CD4-positive, alpha-beta memory T cell (primary cell): ENCODE measurements at regions of chr5 and their contacts with region 1.

Region 1: GRCh38 chr5:112860929-112861637 is at the start of gene SRP19:
- DNase-seq: peak; percentile 90 to 93 (median 92)
- H3K4me3 ChIP-seq: peak within 1 kb of the TSS; percentile 71 to 95
- H3K4me3 Mint-ChIP-seq: peak within 1 kb of the TSS; percentile 96 to 98 (median 97)
- H3K27ac ChIP-seq: peak within 1 kb of the TSS; percentile 97
- H3K27ac Mint-ChIP-seq: peak within 1 kb of the TSS; percentile 98 to 99 (median 98)
- H3K4me1 ChIP-seq: peaks cover 32% of the 10 kb centered on the region
- H3K4me1 Mint-ChIP-seq: peaks cover 19 to 36% (median 30%) of the 10 kb centered on the region in 4 donors
- H3K27me3 ChIP-seq: no peaks in the 10 kb centered on the region
- H3K27me3 Mint-ChIP-seq: peaks cover 6 to 8% of the 10 kb centered on the region in 2 donors
- total RNA-seq, gene SRP19: 51.4 to 54.4 TPM

Region 2: DNA sequence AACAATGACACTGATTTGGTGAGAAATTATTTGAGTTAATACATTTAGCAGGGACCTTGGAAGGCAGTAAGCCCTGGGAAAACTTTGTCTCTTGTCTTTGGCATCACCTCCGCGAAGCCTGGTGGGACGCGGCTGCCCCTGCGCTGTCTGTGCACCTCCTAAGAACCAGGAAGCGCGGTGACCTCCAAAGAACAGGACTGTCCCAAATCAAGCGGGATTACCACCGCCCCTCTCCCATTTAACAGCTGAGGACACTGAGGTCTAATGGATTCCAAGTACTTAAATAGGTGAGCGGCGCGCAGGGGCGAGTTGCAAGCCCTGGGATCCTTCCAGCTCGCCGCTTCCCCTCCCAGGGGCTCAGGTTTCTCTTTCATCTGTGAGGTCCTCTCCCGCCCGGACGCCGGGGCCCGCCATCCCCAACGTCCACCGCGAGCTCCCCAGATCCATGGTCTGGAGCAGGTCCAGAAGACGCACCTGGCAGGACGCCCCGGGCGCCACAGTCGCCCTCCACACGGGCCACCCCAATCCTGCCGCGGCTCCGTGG is 1349.2 kb before region 1 on chr5:
- CTCF ChIA-PET with region 1: no interaction called
- POLR2A ChIA-PET with region 1: no interaction called
- intact Hi-C with region 1: no loop called
- DNase-seq: peak in 1 of 5 donors; percentile 12
- H3K4me3 ChIP-seq: peak overlapping the region; percentile 37 to 77
- H3K4me3 Mint-ChIP-seq: peak overlapping the region; percentile 98 to 99 (median 98)
- H3K27ac ChIP-seq: peak overlapping the region; percentile 77
- H3K27ac Mint-ChIP-seq: peak overlapping the region; percentile 94 to 99 (median 97)
- H3K4me1 ChIP-seq: peaks cover 35% of the 10 kb centered on the region
- H3K4me1 Mint-ChIP-seq: peaks cover 24 to 52% (median 29%) of the 10 kb centered on the region in 4 donors
- H3K27me3 ChIP-seq: no peaks in the 10 kb centered on the region
- H3K27me3 Mint-ChIP-seq: no peaks in the 10 kb centered on the region

Region 3: GRCh38 chr5:112707187-112708102 is 153.6 kb before region 1 on chr5:
- CTCF ChIA-PET with region 1: no interaction called
- POLR2A ChIA-PET with region 1: no interaction called
- intact Hi-C with region 1: loop called (anchors 1 kb)
- DNase-seq: peak; percentile 95 to 99 (median 98)
- H3K4me3 ChIP-seq: peak overlapping the region; percentile 80 to 86
- H3K4me3 Mint-ChIP-seq: peak overlapping the region; percentile 91 to 96 (median 95)
- H3K27ac ChIP-seq: peak overlapping the region; percentile 86
- H3K27ac Mint-ChIP-seq: peak overlapping the region; percentile 89 to 97 (median 93)
- H3K4me1 ChIP-seq: peaks cover 52% of the 10 kb centered on the region
- H3K4me1 Mint-ChIP-seq: peaks cover 41 to 61% (median 48%) of the 10 kb centered on the region in 4 donors
- H3K27me3 ChIP-seq: no peaks in the 10 kb centered on the region
- H3K27me3 Mint-ChIP-seq: no peaks in the 10 kb centered on the region

Region 4: GRCh38 chr5:112823623-112824596 is 37.2 kb before region 1 on chr5:
- CTCF ChIA-PET with region 1: no interaction called
- POLR2A ChIA-PET with region 1: no interaction called
- intact Hi-C with region 1: no loop called
- DNase-seq: no peak
- H3K4me3 ChIP-seq: no peak overlapping the region
- H3K4me3 Mint-ChIP-seq: no peak overlapping the region
- H3K27ac ChIP-seq: no peak overlapping the region
- H3K27ac Mint-ChIP-seq: peak overlapping the region in 1 of 7 donors; percentile 9
- H3K4me1 ChIP-seq: no peaks in the 10 kb centered on the region
- H3K4me1 Mint-ChIP-seq: peaks cover 0 to 6% (median 0%) of the 10 kb centered on the region in 4 donors
- H3K27me3 ChIP-seq: no peaks in the 10 kb centered on the region
- H3K27me3 Mint-ChIP-seq: no peaks in the 10 kb centered on the region

Region 5: GRCh38 chr5:112833971-112834370 is 27.1 kb before region 1 on chr5:
- CTCF ChIA-PET with region 1: no interaction called
- POLR2A ChIA-PET with region 1: no interaction called
- intact Hi-C with region 1: no loop called
- DNase-seq: no peak
- H3K4me3 ChIP-seq: no peak overlapping the region
- H3K4me3 Mint-ChIP-seq: no peak overlapping the region
- H3K27ac ChIP-seq: no peak overlapping the region
- H3K27ac Mint-ChIP-seq: no peak overlapping the region
- H3K4me1 ChIP-seq: no peaks in the 10 kb centered on the region
- H3K4me1 Mint-ChIP-seq: peaks cover 0 to 1% (median 0%) of the 10 kb centered on the region in 4 donors
- H3K27me3 ChIP-seq: no peaks in the 10 kb centered on the region
- H3K27me3 Mint-ChIP-seq: no peaks in the 10 kb centered on the region

Region 6: DNA sequence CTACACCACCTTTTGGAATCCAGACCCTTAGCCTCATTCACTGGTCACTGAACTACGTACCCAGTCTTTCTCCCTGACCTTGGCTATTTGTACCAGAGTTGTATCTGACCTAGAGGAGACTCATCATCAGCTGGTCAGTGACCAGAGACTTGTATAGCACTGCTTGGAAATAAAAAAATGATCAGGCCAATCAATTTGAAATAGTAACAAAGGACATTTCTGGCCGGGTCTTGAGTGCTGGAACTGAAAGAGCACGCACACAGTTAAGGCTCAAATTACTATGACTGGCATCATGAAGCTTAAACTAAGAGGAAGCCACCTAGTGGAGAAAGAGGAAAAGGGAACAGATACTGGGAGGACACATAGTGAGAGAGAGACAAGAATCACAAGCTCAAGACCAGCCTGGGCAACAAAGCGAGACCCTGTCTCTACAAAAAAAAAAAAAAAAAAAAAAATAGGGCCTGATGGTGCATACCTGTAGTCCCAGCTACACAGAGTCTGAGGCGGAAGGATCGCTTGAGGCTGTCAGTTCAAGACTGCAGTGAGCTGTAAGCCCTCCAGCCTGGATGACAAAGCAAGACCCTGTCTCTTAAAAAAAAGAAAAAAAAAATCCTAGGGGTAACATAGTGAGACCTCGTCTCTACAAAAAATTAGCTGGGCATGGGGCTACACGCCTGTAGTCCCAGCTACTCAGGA is 12.8 kb before region 1 on chr5:
- CTCF ChIA-PET with region 1: interaction called, 34 read pairs
- POLR2A ChIA-PET with region 1: interaction called, 8 read pairs
- intact Hi-C with region 1: loop called (anchors 1 kb)
- DNase-seq: peak in 4 of 5 donors; percentile 37 to 43 (median 40)
- H3K4me3 ChIP-seq: no peak overlapping the region
- H3K4me3 Mint-ChIP-seq: peak overlapping the region in 2 of 8 donors; percentile 15 to 55
- H3K27ac ChIP-seq: no peak overlapping the region
- H3K27ac Mint-ChIP-seq: peak overlapping the region in 1 of 7 donors; percentile 10
- H3K4me1 ChIP-seq: peaks cover 3% of the 10 kb centered on the region
- H3K4me1 Mint-ChIP-seq: peaks cover 4 to 5% (median 4%) of the 10 kb centered on the region in 4 donors
- H3K27me3 ChIP-seq: no peaks in the 10 kb centered on the region
- H3K27me3 Mint-ChIP-seq: peaks cover 2 to 3% of the 10 kb centered on the region in 2 donors

Region 7: GRCh38 chr5:112878760-112879159 is 17.7 kb after region 1 on chr5:
- CTCF ChIA-PET with region 1: interaction called, 4 read pairs
- POLR2A ChIA-PET with region 1: interaction called, 20 read pairs
- intact Hi-C with region 1: loop called (anchors 1 kb)
- DNase-seq: peak; percentile 32 to 87 (median 49)
- H3K4me3 ChIP-seq: peak overlapping the region in 1 of 2 donors; percentile 13
- H3K4me3 Mint-ChIP-seq: peak overlapping the region; percentile 3 to 73 (median 48)
- H3K27ac ChIP-seq: peak overlapping the region; percentile 31
- H3K27ac Mint-ChIP-seq: peak overlapping the region; percentile 32 to 88 (median 80)
- H3K4me1 ChIP-seq: peaks cover 47% of the 10 kb centered on the region
- H3K4me1 Mint-ChIP-seq: peaks cover 30 to 50% (median 38%) of the 10 kb centered on the region in 4 donors
- H3K27me3 ChIP-seq: no peaks in the 10 kb centered on the region
- H3K27me3 Mint-ChIP-seq: no peaks in the 10 kb centered on the region

Region 8: GRCh38 chr5:112958093-112959088 is 97.3 kb after region 1 on chr5:
- CTCF ChIA-PET with region 1: interaction called, 4 read pairs
- POLR2A ChIA-PET with region 1: interaction called, 3 read pairs
- intact Hi-C with region 1: loop called (anchors 5 kb)
- DNase-seq: no peak
- H3K4me3 ChIP-seq: no peak overlapping the region
- H3K4me3 Mint-ChIP-seq: no peak overlapping the region
- H3K27ac ChIP-seq: no peak overlapping the region
- H3K27ac Mint-ChIP-seq: no peak overlapping the region
- H3K4me1 ChIP-seq: peaks cover 12% of the 10 kb centered on the region
- H3K4me1 Mint-ChIP-seq: peaks cover 2 to 8% (median 5%) of the 10 kb centered on the region in 4 donors
- H3K27me3 ChIP-seq: no peaks in the 10 kb centered on the region
- H3K27me3 Mint-ChIP-seq: peaks cover 0 to 1% of the 10 kb centered on the region in 2 donors

Region 9: GRCh38 chr5:112976432-112977309 is 115.6 kb after region 1 on chr5 and contains the start of gene DCP2:
- CTCF ChIA-PET with region 1: interaction called, 4 read pairs
- POLR2A ChIA-PET with region 1: interaction called, 17 read pairs
- intact Hi-C with region 1: loop called (anchors 1 kb)
- DNase-seq: peak; percentile 95 to 97 (median 97)
- H3K4me3 ChIP-seq: peak within 1 kb of the TSS; percentile 77 to 79
- H3K4me3 Mint-ChIP-seq: peak within 1 kb of the TSS; percentile 96 to 100 (median 99)
- H3K27ac ChIP-seq: peak within 1 kb of the TSS; percentile 85
- H3K27ac Mint-ChIP-seq: peak within 1 kb of the TSS; percentile 94 to 98 (median 97)
- H3K4me1 ChIP-seq: peaks cover 45% of the 10 kb centered on the region
- H3K4me1 Mint-ChIP-seq: peaks cover 31 to 63% (median 43%) of the 10 kb centered on the region in 4 donors
- H3K27me3 ChIP-seq: no peaks in the 10 kb centered on the region
- H3K27me3 Mint-ChIP-seq: peaks cover 0 to 4% of the 10 kb centered on the region in 2 donors
- total RNA-seq, gene DCP2: 116 to 123 TPM

Region 10: GRCh38 chr5:113132564-113132963 is 271.5 kb after region 1 on chr5:
- CTCF ChIA-PET with region 1: no interaction called
- POLR2A ChIA-PET with region 1: no interaction called
- intact Hi-C with region 1: no loop called
- DNase-seq: no peak
- H3K4me3 ChIP-seq: no peak overlapping the region
- H3K4me3 Mint-ChIP-seq: no peak overlapping the region
- H3K27ac ChIP-seq: no peak overlapping the region
- H3K27ac Mint-ChIP-seq: no peak overlapping the region
- H3K4me1 ChIP-seq: no peaks in the 10 kb centered on the region
- H3K4me1 Mint-ChIP-seq: peaks cover 0 to 2% (median 0%) of the 10 kb centered on the region in 4 donors
- H3K27me3 ChIP-seq: no peaks in the 10 kb centered on the region
- H3K27me3 Mint-ChIP-seq: no peaks in the 10 kb centered on the region